Endothelial cell of umbilical vein (primary cell): ENCODE measurements at regions of chr4 and their contacts with region 1.

Region 1: GRCh38 chr4:88158489-88159243 is at the start of gene ABCG2:
- DNase-seq: peak; percentile 72
- H3K4me3 ChIP-seq: peak within 1 kb of the TSS; percentile 48 to 74 (median 52)
- H3K27ac ChIP-seq: peak within 1 kb of the TSS; percentile 19
- H3K4me1 ChIP-seq: peaks cover 12% of the 10 kb centered on the region
- H3K27me3 ChIP-seq: no peaks in the 10 kb centered on the region
- CTCF ChIP-seq: no peak
- POLR2A ChIP-seq: peak; percentile 24
- total RNA-seq, gene ABCG2: 5.0 and 6.4 TPM in 2 replicates

Region 2: DNA sequence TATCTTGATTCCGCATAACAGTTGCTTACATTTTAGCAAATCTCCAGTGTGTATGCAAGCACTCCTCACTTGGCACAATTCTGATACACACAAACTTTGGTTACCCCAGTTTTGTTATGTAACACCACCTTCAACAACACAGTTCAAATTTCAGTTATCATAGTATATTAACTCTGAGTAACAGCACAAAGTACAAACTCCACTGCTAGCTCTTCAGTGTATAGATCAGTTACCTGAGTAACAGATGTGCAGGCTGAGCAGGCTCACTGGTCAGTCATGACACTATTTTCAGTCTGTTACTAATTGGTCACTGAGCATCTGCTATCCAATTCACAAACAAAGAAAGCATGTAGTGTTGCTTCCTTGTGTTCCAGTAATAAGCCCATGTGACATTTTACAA is 95.8 kb before region 1 on chr4:
- CTCF ChIA-PET with region 1: no interaction called
- POLR2A ChIA-PET with region 1: no interaction called
- dilution Hi-C with region 1: no loop called
- intact Hi-C with region 1: loop called (anchors 5 kb)
- DNase-seq: no peak
- H3K4me3 ChIP-seq: no peak overlapping the region
- H3K27ac ChIP-seq: no peak overlapping the region
- H3K4me1 ChIP-seq: peaks cover 6% of the 10 kb centered on the region
- H3K27me3 ChIP-seq: no peaks in the 10 kb centered on the region
- CTCF ChIP-seq: no peak
- POLR2A ChIP-seq: no peak

Region 3: DNA sequence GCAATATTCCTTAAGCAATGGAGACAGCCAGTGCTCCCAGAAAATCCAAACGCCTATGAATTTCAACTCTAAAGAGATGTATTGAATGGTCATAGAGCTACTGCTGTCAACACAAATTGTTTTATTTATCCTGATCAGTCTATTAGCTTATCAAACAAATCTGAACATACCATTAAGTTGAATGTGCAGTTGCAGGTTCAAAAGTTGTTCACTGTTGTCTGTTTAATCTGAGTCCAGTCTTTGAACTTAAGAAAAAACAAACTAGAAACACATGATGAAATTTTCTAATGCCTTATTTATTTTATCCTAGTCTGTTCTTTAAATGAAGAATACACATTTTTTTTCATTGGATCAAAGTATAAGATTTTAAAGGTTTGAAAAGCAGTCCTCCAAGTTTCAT is 78.0 kb before region 1 on chr4:
- CTCF ChIA-PET with region 1: no interaction called
- POLR2A ChIA-PET with region 1: no interaction called
- dilution Hi-C with region 1: no loop called
- intact Hi-C with region 1: loop called (anchors 5 kb)
- DNase-seq: no peak
- H3K4me3 ChIP-seq: no peak overlapping the region
- H3K27ac ChIP-seq: no peak overlapping the region
- H3K4me1 ChIP-seq: no peaks in the 10 kb centered on the region
- H3K27me3 ChIP-seq: no peaks in the 10 kb centered on the region
- CTCF ChIP-seq: no peak
- POLR2A ChIP-seq: no peak